ENCODE measurements at regions of chr3 and their contacts with region 1.

Region 1: DNA sequence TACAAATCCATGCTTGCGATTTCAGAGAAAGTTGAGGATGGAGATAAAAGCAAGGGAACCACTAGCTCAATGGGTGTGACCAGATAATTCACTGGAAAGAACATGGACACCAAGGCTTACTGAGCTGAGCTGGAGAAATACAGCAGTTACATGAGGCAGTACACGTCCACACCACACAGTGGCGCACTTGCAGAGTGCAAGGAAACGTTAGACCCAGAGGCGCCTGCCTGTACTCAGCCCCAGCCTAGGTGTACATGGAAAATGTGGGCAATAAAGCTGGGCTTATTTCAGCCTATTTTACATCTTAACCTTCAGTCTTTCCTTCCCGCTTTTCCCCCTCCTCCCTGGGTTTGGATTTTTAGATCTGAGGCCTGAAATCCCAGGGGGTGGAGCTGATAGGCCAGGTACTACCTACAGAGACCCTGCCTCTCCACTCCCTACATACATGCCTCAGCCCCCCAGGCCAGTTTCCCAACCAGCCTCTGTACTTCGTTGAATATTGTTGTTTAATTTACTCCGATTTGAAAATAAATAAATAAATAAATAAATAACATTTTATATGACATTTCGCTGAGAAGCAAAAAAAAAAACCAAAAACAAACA is 60.1 kb downstream of the PCOLCE2 start:
- DNase-seq: peak; percentile 68
- ATAC-seq: peak; percentile 100
- H3K4me3 ChIP-seq: no peak overlapping the region
- H3K27ac ChIP-seq: no peak overlapping the region
- H3K4me1 ChIP-seq: no peaks in the 10 kb centered on the region
- H3K27me3 ChIP-seq: no peaks in the 10 kb centered on the region
- CTCF ChIP-seq: peak; percentile 89 to 92 (median 91)
- POLR2A ChIP-seq: no peak
- RAD21 ChIP-seq: peak; percentile 95

Region 2: GRCh38 chr3:142586803-142587406 is 241.9 kb before region 1 on chr3:
- CTCF ChIA-PET with region 1: interaction called, 16 read pairs
- POLR2A ChIA-PET with region 1: interaction called, 3 read pairs
- RAD21 ChIA-PET with region 1: interaction called, 5 to 6 read pairs
- intact Hi-C with region 1: loop called (anchors 2 kb)
- DNase-seq: peak; percentile 80
- ATAC-seq: peak; percentile 96
- H3K4me3 ChIP-seq: no peak overlapping the region
- H3K27ac ChIP-seq: no peak overlapping the region
- H3K4me1 ChIP-seq: peaks cover 0 to 9% of the 10 kb centered on the region in 2 experiments; a peak in 2 of 4 replicates
- H3K27me3 ChIP-seq: no peaks in the 10 kb centered on the region
- CTCF ChIP-seq: peak; percentile 70 to 92 (median 74)
- POLR2A ChIP-seq: no peak
- RAD21 ChIP-seq: peak; percentile 98

Region 3: DNA sequence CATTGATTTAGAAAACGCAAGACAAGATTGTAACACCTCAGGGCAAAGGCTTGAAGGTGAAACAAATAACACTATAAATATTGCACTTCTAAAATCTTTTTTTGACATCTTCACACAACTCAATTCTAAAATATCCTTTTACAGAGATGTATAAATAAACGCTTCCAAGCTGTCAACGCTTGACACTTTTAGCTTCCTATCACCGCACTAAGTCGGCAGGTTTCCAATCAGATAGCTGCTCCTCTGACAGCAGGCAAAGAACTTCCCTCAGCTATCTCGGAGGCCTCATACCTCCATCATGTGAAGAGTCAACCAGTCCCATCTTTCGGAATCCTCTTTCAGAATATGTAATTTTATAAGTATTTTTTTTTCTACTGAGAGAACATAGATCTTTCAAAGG is 10.9 kb before region 1 on chr3:
- CTCF ChIA-PET with region 1: interaction called, 11 read pairs
- POLR2A ChIA-PET with region 1: no interaction called
- RAD21 ChIA-PET with region 1: no interaction called
- intact Hi-C with region 1: no loop called
- DNase-seq: no peak
- ATAC-seq: no peak
- H3K4me3 ChIP-seq: no peak overlapping the region
- H3K27ac ChIP-seq: no peak overlapping the region
- H3K4me1 ChIP-seq: no peaks in the 10 kb centered on the region
- H3K27me3 ChIP-seq: no peaks in the 10 kb centered on the region
- CTCF ChIP-seq: no peak
- POLR2A ChIP-seq: no peak
- RAD21 ChIP-seq: no peak

Region 4: DNA sequence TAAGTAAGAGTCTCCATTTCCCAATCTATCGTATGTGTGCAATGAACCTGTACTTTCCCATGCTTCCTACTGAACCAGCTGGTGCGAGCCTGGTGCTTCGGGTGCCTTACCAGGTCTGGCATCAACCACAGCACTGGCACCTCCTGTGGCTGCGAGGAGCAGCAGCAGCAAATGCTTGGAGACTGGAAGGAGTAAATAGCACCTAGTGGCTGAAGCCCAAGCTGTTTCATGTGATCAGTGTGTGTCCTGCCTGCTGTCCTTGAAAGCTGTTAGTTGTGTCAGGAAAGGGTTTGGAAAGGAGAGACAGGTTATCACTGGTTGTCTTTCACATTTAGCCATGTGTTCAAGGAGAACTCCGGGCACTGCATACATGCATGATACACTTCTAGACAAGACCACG is 28.3 kb after region 1 on chr3:
- CTCF ChIA-PET with region 1: interaction called, 11 read pairs
- POLR2A ChIA-PET with region 1: no interaction called
- RAD21 ChIA-PET with region 1: interaction called in 1 of 2 experiments, 4 read pairs
- intact Hi-C with region 1: no loop called
- DNase-seq: peak; percentile 46
- ATAC-seq: peak; percentile 97
- H3K4me3 ChIP-seq: no peak overlapping the region
- H3K27ac ChIP-seq: no peak overlapping the region
- H3K4me1 ChIP-seq: peaks cover 8 to 17% of the 10 kb centered on the region in 2 experiments
- H3K27me3 ChIP-seq: peaks cover 11% of the 10 kb centered on the region; the same call in 1 of the 2 replicates
- CTCF ChIP-seq: peak; percentile 29 to 69 (median 63); a peak in 5 of 6 replicates
- POLR2A ChIP-seq: no peak
- RAD21 ChIP-seq: peak; percentile 30

Region 5: GRCh38 chr3:142929109-142929508 is 100.3 kb after region 1 on chr3:
- CTCF ChIA-PET with region 1: interaction called, 14 read pairs
- POLR2A ChIA-PET with region 1: no interaction called
- RAD21 ChIA-PET with region 1: no interaction called
- intact Hi-C with region 1: no loop called
- DNase-seq: peak; percentile 62
- ATAC-seq: peak; percentile 97
- H3K4me3 ChIP-seq: no peak overlapping the region
- H3K27ac ChIP-seq: no peak overlapping the region
- H3K4me1 ChIP-seq: peaks cover 0 to 4% of the 10 kb centered on the region in 2 experiments; a peak in 1 of 4 replicates
- H3K27me3 ChIP-seq: no peaks in the 10 kb centered on the region
- CTCF ChIP-seq: peak; percentile 71 to 83 (median 76)
- POLR2A ChIP-seq: no peak
- RAD21 ChIP-seq: peak; percentile 70

Region 6: DNA sequence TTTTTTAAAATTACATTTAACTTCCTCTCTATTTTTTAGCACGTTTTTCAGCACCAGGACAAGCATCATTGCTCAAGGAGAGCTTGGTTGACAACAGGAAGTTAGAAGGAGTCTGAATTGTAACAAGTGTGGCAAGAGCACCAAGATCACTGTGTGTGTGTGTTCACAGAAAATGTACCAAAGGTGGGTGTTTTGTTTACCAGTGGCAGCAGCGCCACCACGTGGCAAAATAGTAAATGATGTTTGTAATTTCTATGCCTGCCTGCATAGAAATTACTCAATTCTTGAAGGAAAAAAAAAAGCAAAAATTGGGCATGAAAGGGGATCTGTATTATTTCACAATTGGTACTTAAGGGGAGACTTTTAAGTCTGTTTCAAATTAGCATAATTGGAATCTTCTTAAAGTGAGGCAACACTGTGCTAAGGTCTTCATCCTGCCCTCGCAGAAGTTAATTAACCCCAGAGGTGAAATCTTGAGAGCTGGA is 165.2 kb after region 1 on chr3:
- CTCF ChIA-PET with region 1: interaction called, 33 read pairs
- POLR2A ChIA-PET with region 1: no interaction called
- RAD21 ChIA-PET with region 1: interaction called, 4 to 5 read pairs
- intact Hi-C with region 1: loop called (anchors 1 kb)
- DNase-seq: peak; percentile 59
- ATAC-seq: peak; percentile 78
- H3K4me3 ChIP-seq: no peak overlapping the region
- H3K27ac ChIP-seq: no peak overlapping the region
- H3K4me1 ChIP-seq: peaks cover 9 to 20% of the 10 kb centered on the region in 2 experiments; a peak in 3 of 4 replicates
- H3K27me3 ChIP-seq: no peaks in the 10 kb centered on the region
- CTCF ChIP-seq: peak; percentile 57 to 84 (median 83)
- POLR2A ChIP-seq: no peak
- RAD21 ChIP-seq: peak; percentile 89

Measured in HCT116 (cell line).